ENCODE measurements at regions of chr17 and their contacts with region 1.

Region 1: DNA sequence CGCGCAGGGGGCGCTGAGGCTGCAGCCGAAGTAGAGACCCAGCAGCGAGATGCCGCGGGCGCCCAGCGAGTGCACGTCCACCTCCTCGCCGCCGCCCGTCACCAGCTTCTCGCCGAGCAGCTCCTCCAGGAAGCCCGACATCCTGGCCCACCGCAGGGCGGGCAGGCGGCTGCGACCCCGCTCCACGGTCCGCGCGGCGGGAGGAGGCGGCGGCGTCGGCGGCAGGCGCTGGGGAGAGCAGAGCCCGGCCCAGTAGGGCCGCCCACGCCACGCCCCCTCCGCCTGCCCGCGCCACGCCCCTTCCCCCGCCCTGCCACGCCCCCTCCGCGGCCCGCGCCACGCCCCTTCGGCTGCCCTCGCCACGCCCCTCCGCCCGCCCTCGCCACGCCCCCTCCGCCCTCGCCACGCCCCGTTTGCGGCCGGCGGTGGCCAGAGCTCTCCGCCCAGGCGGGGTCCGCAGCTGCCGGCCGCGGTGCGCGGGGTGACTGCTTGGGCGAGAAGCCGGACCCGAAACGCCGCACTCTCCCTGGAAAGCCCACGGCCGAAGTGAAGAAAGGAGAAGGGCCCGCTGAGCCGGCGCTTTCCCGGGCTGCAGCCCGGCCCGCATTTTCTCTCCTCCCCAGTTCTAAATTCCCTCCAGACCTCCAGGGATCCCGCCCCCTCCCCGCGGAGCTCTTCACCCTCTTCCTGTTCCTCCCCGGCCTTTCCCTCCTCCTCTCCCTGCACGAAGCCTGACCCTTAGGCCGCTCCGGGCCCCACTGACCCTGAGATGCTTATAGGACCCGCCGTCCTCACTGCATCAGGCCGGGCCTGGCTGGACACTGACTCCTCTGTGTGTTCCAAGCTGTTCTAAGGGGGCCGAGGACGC is at the start of gene NXN:
- DNase-seq: no peak
- ATAC-seq: peak; percentile 82
- H3K4me3 ChIP-seq: peak within 1 kb of the TSS; percentile 66 to 85
- H3K27ac ChIP-seq: peak within 1 kb of the TSS; percentile 76
- H3K4me1 ChIP-seq: peaks cover 18 to 51% of the 10 kb centered on the region in 2 experiments
- H3K27me3 ChIP-seq: no peaks in the 10 kb centered on the region
- CTCF ChIP-seq: no peak
- POLR2A ChIP-seq: peak; percentile 37
- RAD21 ChIP-seq: peak; percentile 49
- total RNA-seq, gene NXN: 83.7 TPM

Region 2: GRCh38 chr17:409848-410545 is 569.8 kb before region 1 on chr17:
- CTCF ChIA-PET with region 1: interaction called, 14 read pairs
- POLR2A ChIA-PET with region 1: no interaction called
- RAD21 ChIA-PET with region 1: no interaction called
- intact Hi-C with region 1: loop called (anchors 5 kb)
- DNase-seq: peak; percentile 97
- ATAC-seq: peak; percentile 88
- H3K4me3 ChIP-seq: peak overlapping the region; percentile 82 to 83
- H3K27ac ChIP-seq: peak overlapping the region; percentile 55
- H3K4me1 ChIP-seq: peaks cover 6 to 19% of the 10 kb centered on the region in 2 experiments; a peak in 3 of 4 replicates
- H3K27me3 ChIP-seq: no peaks in the 10 kb centered on the region
- CTCF ChIP-seq: no peak
- POLR2A ChIP-seq: peak; percentile 77
- RAD21 ChIP-seq: no peak

Region 3: DNA sequence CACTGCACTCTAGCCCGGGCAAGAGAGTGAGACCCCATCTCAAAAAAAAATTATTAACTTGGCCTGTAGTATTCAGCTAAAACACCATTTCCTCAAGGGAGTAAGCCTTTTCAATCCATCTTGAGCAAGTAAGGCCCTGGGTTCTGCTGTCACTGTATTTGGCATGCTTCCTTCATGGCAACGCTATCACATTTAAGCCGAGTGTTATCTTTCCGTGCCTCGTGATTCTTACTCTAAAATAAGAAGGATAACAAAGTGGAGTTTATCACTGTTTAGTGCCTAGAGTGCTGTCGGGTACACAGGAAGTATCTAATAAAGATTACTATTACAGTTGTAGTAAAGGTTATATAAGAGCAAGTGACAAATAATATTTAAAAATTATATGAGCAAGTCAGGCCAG is 273.9 kb before region 1 on chr17:
- CTCF ChIA-PET with region 1: interaction called, 4 read pairs
- POLR2A ChIA-PET with region 1: no interaction called
- RAD21 ChIA-PET with region 1: interaction called in 1 of 2 experiments, 3 read pairs
- intact Hi-C with region 1: loop called (anchors 5 kb)
- DNase-seq: no peak
- ATAC-seq: no peak
- H3K4me3 ChIP-seq: no peak overlapping the region
- H3K27ac ChIP-seq: no peak overlapping the region
- H3K4me1 ChIP-seq: no peaks in the 10 kb centered on the region
- H3K27me3 ChIP-seq: no peaks in the 10 kb centered on the region
- CTCF ChIP-seq: no peak
- POLR2A ChIP-seq: no peak
- RAD21 ChIP-seq: no peak

Region 4: GRCh38 chr17:794876-795275 is 184.9 kb before region 1 on chr17:
- CTCF ChIA-PET with region 1: interaction called, 87 read pairs
- POLR2A ChIA-PET with region 1: interaction called, 9 read pairs
- RAD21 ChIA-PET with region 1: interaction called, 14 to 16 read pairs
- intact Hi-C with region 1: loop called (anchors 1 kb)
- DNase-seq: peak; percentile 47
- ATAC-seq: peak; percentile 70
- H3K4me3 ChIP-seq: no peak overlapping the region
- H3K27ac ChIP-seq: no peak overlapping the region; the same call in 1 of the 2 replicates
- H3K4me1 ChIP-seq: peaks cover 0 to 11% of the 10 kb centered on the region in 2 experiments; a peak in 2 of 4 replicates
- H3K27me3 ChIP-seq: no peaks in the 10 kb centered on the region
- CTCF ChIP-seq: peak; percentile 87 to 95 (median 95)
- POLR2A ChIP-seq: no peak
- RAD21 ChIP-seq: peak; percentile 98

Region 5: DNA sequence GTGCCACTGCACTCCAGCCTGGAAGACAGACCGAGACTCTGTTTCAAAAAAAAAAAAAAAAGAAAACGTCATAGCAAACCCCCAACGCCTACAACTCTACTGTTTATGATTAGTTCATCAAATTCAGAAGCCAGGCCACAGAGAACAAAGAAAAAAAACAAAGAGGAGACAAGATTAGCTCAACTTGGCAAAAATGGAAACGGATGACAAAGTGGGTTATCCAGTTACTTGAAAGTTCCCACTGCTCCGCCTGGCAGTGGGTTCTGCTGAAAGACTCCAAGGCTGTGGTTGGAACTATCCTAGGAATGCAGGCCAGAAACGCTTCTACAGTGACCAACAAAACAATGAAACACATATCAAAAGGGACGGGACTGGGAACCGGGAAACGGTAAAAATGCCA is 144.5 kb before region 1 on chr17:
- CTCF ChIA-PET with region 1: no interaction called
- POLR2A ChIA-PET with region 1: no interaction called
- RAD21 ChIA-PET with region 1: no interaction called
- intact Hi-C with region 1: no loop called
- DNase-seq: no peak
- ATAC-seq: no peak
- H3K4me3 ChIP-seq: no peak overlapping the region
- H3K27ac ChIP-seq: no peak overlapping the region
- H3K4me1 ChIP-seq: peaks cover 0 to 4% of the 10 kb centered on the region in 2 experiments; a peak in 1 of 4 replicates
- H3K27me3 ChIP-seq: no peaks in the 10 kb centered on the region
- CTCF ChIP-seq: no peak
- POLR2A ChIP-seq: no peak
- RAD21 ChIP-seq: no peak

Region 6: GRCh38 chr17:879549-880442 is 100.0 kb before region 1 on chr17:
- CTCF ChIA-PET with region 1: interaction called, 50 read pairs
- POLR2A ChIA-PET with region 1: interaction called, 4 read pairs
- RAD21 ChIA-PET with region 1: interaction called, 3 to 10 read pairs
- intact Hi-C with region 1: loop called (anchors 1 kb)
- DNase-seq: peak; percentile 89
- ATAC-seq: peak; percentile 84
- H3K4me3 ChIP-seq: no peak overlapping the region
- H3K27ac ChIP-seq: peak overlapping the region; percentile 42
- H3K4me1 ChIP-seq: peaks cover 38 to 61% of the 10 kb centered on the region in 2 experiments
- H3K27me3 ChIP-seq: no peaks in the 10 kb centered on the region
- CTCF ChIP-seq: peak; percentile 63 to 79 (median 71)
- POLR2A ChIP-seq: no peak
- RAD21 ChIP-seq: peak; percentile 90

Region 7: GRCh38 chr17:933312-934083 is 46.3 kb before region 1 on chr17:
- CTCF ChIA-PET with region 1: interaction called, 18 read pairs
- POLR2A ChIA-PET with region 1: no interaction called
- RAD21 ChIA-PET with region 1: interaction called, 3 to 7 read pairs
- intact Hi-C with region 1: no loop called
- DNase-seq: peak; percentile 98
- ATAC-seq: peak; percentile 73
- H3K4me3 ChIP-seq: peak overlapping the region; percentile 24 to 52
- H3K27ac ChIP-seq: peak overlapping the region; percentile 97
- H3K4me1 ChIP-seq: peaks cover 81 to 99% of the 10 kb centered on the region in 2 experiments
- H3K27me3 ChIP-seq: no peaks in the 10 kb centered on the region
- CTCF ChIP-seq: no peak
- POLR2A ChIP-seq: no peak
- RAD21 ChIP-seq: peak; percentile 46; the same call in 1 of the 2 replicates

Region 8: GRCh38 chr17:996554-997344 is 17.0 kb after region 1 on chr17 and contains the start of gene TIMM22:
- CTCF ChIA-PET with region 1: interaction called, 29 read pairs
- POLR2A ChIA-PET with region 1: interaction called, 3 read pairs
- RAD21 ChIA-PET with region 1: interaction called, 3 to 4 read pairs
- intact Hi-C with region 1: no loop called
- DNase-seq: peak; percentile 96
- ATAC-seq: peak; percentile 95
- H3K4me3 ChIP-seq: peak within 1 kb of the TSS; percentile 99 to 100
- H3K27ac ChIP-seq: peak within 1 kb of the TSS; percentile 58
- H3K4me1 ChIP-seq: peaks cover 8 to 19% of the 10 kb centered on the region in 2 experiments; a peak in 3 of 4 replicates
- H3K27me3 ChIP-seq: no peaks in the 10 kb centered on the region
- CTCF ChIP-seq: peak; percentile 88 to 93 (median 91); a peak in 5 of 6 replicates
- POLR2A ChIP-seq: peak; percentile 80
- RAD21 ChIP-seq: peak; percentile 98
- total RNA-seq, gene TIMM22: 14.0 TPM

Region 9: GRCh38 chr17:1031711-1032110 is 51.9 kb after region 1 on chr17:
- CTCF ChIA-PET with region 1: no interaction called
- POLR2A ChIA-PET with region 1: no interaction called
- RAD21 ChIA-PET with region 1: no interaction called
- intact Hi-C with region 1: no loop called
- DNase-seq: no peak
- ATAC-seq: no peak
- H3K4me3 ChIP-seq: no peak overlapping the region
- H3K27ac ChIP-seq: no peak overlapping the region
- H3K4me1 ChIP-seq: peaks cover 0 to 5% of the 10 kb centered on the region in 2 experiments; a peak in 2 of 4 replicates
- H3K27me3 ChIP-seq: no peaks in the 10 kb centered on the region
- CTCF ChIP-seq: no peak
- POLR2A ChIP-seq: no peak
- RAD21 ChIP-seq: no peak

Region 10: DNA sequence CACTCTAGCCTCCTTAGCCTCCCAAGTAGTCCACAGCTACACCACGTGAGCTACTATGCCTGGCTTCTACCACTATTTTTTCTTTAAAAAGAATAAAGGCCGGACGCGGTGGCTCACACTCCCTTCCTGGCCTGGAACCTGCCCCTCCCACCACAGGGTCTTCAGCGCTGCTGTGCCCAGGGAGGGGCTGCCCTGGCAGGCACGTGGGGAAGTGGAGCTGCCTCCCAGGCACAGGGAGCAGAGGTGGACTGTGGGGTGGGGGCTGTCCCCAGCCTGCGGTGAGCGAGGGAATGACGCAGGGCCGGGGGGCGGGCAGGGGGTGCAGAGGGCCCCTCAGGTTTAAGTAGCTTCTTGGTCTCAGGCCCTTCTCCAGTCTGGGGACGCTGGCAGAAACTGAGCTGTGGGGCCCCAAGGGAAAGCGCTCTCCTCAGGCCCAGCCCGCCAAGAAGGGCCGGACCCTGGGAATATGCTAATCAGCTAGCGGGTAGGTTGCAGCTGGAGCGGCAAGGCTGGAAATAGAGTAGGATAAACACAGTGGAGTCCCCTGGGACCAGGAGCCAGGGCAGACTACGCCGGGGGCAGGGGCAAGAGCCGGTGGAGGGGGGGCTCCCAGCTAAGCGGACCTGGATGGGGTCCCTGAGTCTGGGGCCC is 64.0 kb after region 1 on chr17:
- CTCF ChIA-PET with region 1: no interaction called
- POLR2A ChIA-PET with region 1: no interaction called
- RAD21 ChIA-PET with region 1: no interaction called
- intact Hi-C with region 1: no loop called
- DNase-seq: no peak
- ATAC-seq: no peak
- H3K4me3 ChIP-seq: no peak overlapping the region
- H3K27ac ChIP-seq: no peak overlapping the region
- H3K4me1 ChIP-seq: no peaks in the 10 kb centered on the region
- H3K27me3 ChIP-seq: no peaks in the 10 kb centered on the region
- CTCF ChIP-seq: no peak
- POLR2A ChIP-seq: no peak
- RAD21 ChIP-seq: no peak